PC-9 (cell line): ENCODE measurements at regions of chr3 and their contacts with region 1.

Region 1: DNA sequence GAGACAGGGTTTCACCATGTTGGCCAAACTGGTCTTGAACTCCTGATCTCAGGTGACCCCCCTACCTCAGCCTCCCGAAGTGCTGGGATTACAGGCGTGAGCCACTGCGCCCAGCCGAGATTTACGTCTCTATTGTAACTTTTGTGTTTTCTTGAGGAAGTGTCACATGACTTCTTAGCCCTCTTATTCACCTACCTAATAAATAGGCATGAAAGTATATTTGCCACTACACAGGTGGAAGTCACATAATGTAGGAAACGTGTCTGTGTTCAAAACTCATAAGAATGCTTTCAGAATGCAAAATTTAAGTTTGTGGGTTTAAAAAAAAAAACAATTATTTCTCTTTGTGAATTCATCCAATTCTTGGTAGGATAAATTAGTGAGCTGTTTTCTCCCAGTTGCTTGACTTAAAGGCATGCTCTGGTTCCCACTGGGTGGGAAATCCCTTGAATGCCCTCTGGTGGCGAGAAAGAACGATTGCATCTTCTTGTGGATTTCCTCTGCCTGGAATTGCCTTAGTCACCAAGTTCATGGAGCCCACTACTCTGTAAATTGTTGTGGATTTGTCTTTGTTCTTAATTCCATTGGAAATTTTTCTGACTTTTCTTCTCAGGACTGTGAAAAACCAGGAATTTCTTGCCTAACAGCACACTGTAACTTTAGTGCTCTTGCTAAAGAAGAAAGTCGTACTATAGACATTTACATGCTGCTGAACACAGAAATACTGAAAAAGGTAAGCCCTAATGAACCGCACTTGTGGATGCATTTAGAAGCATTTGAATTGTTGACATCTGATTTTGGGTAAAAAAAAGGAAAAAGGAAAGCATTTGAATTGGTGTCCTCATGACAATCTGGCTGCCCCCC is 82.2 kb upstream of the CTDSPL start:
- DNase-seq: peak; percentile 8 to 41
- H3K4me3 ChIP-seq: no peak overlapping the region
- H3K27ac ChIP-seq: no peak overlapping the region
- H3K4me1 ChIP-seq: no peaks in the 10 kb centered on the region
- H3K27me3 ChIP-seq: peaks cover 26% of the 10 kb centered on the region
- CTCF ChIP-seq: peak; percentile 83

Region 2: DNA sequence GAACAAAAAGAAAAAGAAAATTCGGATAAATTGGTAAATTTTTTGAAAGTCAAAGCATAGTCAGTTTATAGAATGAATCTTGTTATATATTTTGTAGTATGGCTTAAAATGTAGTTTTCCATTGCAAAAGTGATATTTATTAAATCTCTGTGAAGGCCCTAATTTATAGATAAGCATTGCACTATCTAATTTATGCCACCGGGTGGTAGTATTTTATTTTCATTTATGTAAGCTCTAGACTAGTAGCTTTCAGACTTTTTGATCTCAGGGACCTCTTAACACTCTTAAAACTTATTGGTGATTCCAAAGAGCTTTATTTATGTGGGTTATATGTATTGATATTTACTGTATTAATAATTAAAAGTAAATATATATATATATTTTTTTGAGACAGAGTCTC is 471.3 kb before region 1 on chr3:
- CTCF ChIA-PET with region 1: no interaction called
- POLR2A ChIA-PET with region 1: no interaction called
- intact Hi-C with region 1: loop called (anchors 5 kb)
- DNase-seq: no peak
- H3K4me3 ChIP-seq: no peak overlapping the region
- H3K27ac ChIP-seq: no peak overlapping the region
- H3K4me1 ChIP-seq: no peaks in the 10 kb centered on the region
- H3K27me3 ChIP-seq: no peaks in the 10 kb centered on the region
- CTCF ChIP-seq: peak; percentile 52; the same call in 1 of the 2 replicates

Region 3: DNA sequence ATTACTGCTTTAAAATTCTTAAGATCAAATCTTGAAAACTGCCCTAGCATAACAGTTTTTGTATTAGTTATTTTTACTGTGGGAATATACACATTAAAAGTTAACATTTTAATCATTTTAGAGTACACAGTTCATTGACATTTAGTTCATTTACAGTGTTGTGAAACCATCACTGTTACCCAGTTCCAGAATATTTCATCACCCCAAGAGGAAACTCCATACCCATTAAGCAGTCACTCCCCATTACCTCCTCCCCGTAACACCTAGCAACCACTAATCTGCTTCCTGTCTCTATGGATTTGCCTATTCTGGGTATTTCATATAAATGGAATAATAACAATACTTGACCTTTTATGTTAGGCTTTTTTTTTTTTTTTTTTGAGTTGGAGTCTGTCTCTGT is 441.0 kb before region 1 on chr3:
- CTCF ChIA-PET with region 1: interaction called, 10 read pairs
- POLR2A ChIA-PET with region 1: no interaction called
- intact Hi-C with region 1: no loop called
- DNase-seq: no peak
- H3K4me3 ChIP-seq: no peak overlapping the region
- H3K27ac ChIP-seq: no peak overlapping the region
- H3K4me1 ChIP-seq: no peaks in the 10 kb centered on the region
- H3K27me3 ChIP-seq: no peaks in the 10 kb centered on the region
- CTCF ChIP-seq: no peak

Region 4: GRCh38 chr3:37494216-37494615 is 285.3 kb before region 1 on chr3:
- CTCF ChIA-PET with region 1: no interaction called
- POLR2A ChIA-PET with region 1: no interaction called
- intact Hi-C with region 1: no loop called
- DNase-seq: no peak
- H3K4me3 ChIP-seq: no peak overlapping the region
- H3K27ac ChIP-seq: no peak overlapping the region
- H3K4me1 ChIP-seq: no peaks in the 10 kb centered on the region
- H3K27me3 ChIP-seq: peaks cover 56% of the 10 kb centered on the region
- CTCF ChIP-seq: no peak